ENCODE measurements at regions of chr14 and their contacts with region 1.

Region 1: DNA sequence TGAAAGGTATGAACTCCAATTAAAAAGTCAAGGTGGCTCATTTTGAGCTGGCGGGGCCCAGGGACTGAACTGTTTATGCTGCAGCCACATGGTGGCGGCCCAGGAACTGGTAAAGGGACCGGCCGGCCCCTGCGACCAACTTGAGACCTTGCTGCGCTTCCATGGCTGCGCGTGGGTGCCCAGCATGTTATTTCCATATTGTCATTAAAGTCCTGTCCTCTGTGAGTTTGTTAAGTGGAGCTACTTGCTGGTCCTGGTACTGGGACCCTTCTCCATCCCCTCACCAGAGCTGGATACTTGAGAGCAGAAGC is 62.3 kb downstream of the BEGAIN start:
- DNase-seq: peak; percentile 29 to 86 (median 68)
- ATAC-seq: peak; percentile 46 to 93 (median 83)
- H3K4me3 ChIP-seq: no peak overlapping the region
- H3K27ac ChIP-seq: no peak overlapping the region
- H3K4me1 ChIP-seq: no peaks in the 10 kb centered on the region
- H3K27me3 ChIP-seq: no peaks in the 10 kb centered on the region
- CTCF ChIP-seq: peak in 1 of 4 donors; percentile 60

Region 2: DNA sequence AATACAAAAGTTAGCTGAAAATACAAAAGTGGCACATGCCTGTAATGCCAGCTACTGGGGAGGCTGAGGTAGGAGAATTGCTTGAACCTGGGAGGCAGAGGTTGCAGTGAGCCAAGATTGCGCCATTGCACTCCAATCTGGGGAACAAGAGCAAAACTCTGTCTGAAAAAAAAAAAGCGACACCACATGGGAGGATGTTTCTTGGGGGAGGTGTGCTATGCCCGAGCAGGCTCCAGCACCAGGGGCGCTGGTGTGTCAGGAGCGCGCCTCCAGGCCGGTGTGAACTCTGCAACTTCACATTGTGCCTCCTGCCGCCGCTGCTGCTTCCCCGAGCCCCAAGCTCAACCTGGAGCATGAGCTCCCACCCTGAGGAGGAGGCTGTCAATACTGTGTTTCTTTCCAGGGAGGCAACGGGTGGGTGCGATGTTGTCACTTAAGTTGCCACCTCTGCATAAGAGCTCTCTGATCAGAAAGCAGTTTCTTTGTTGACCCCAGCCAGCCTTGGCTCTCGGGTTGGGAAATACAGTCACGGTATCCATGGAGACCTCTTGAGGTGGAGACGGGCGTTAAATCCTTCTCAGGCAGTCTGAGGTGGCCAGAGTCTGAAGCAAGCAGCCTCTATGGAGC is 384.3 kb before region 1 on chr14:
- intact Hi-C with region 1: no loop called
- DNase-seq: peak in 1 of 6 donors; percentile 55
- ATAC-seq: peak in 2 of 4 donors; percentile 33 to 35
- H3K4me3 ChIP-seq: no peak overlapping the region
- H3K27ac ChIP-seq: peak overlapping the region in 1 of 4 donors; percentile 60
- H3K4me1 ChIP-seq: peaks cover 8 to 14% (median 10%) of the 10 kb centered on the region in 3 donors
- H3K27me3 ChIP-seq: no peaks in the 10 kb centered on the region
- CTCF ChIP-seq: no peak

Region 3: GRCh38 chr14:100466111-100466856 is 58.6 kb before region 1 on chr14:
- intact Hi-C with region 1: no loop called
- DNase-seq: no peak
- ATAC-seq: no peak
- H3K4me3 ChIP-seq: no peak overlapping the region
- H3K27ac ChIP-seq: no peak overlapping the region
- H3K4me1 ChIP-seq: peaks cover 0 to 2% (median 0%) of the 10 kb centered on the region in 3 donors
- H3K27me3 ChIP-seq: no peaks in the 10 kb centered on the region
- CTCF ChIP-seq: no peak

Region 4: GRCh38 chr14:100645192-100645990 is 120.5 kb after region 1 on chr14:
- intact Hi-C with region 1: loop called in 2 of 3 experiments (anchors 5 kb)
- DNase-seq: peak; percentile 84 to 93 (median 92)
- ATAC-seq: peak; percentile 83 to 96 (median 92)
- H3K4me3 ChIP-seq: no peak overlapping the region
- H3K27ac ChIP-seq: no peak overlapping the region
- H3K4me1 ChIP-seq: peaks cover 4 to 21% (median 6%) of the 10 kb centered on the region in 3 donors
- H3K27me3 ChIP-seq: no peaks in the 10 kb centered on the region
- CTCF ChIP-seq: peak; percentile 46 to 70 (median 68)